ENCODE measurements at regions of chr10 and their contacts with region 1.

Region 1: GRCh38 chr10:95656291-95657164 is at the start of gene ALDH18A1:
- DNase-seq: peak; percentile 96
- ATAC-seq: peak; percentile 95
- H3K4me3 ChIP-seq: peak within 1 kb of the TSS; percentile 0 to 74 (median 64)
- H3K4me3 Mint-ChIP-seq: peak within 1 kb of the TSS; percentile 98
- H3K27ac ChIP-seq: peak within 1 kb of the TSS in 1 of 2 donors; percentile 27
- H3K27ac Mint-ChIP-seq: peak within 1 kb of the TSS; percentile 93
- H3K4me1 ChIP-seq: peaks cover 7 to 13% of the 10 kb centered on the region in 2 donors
- H3K4me1 Mint-ChIP-seq: peaks cover 30% of the 10 kb centered on the region
- H3K27me3 ChIP-seq: no peaks in the 10 kb centered on the region
- H3K27me3 Mint-ChIP-seq: no peaks in the 10 kb centered on the region
- CTCF ChIP-seq: no peak
- total RNA-seq, gene ALDH18A1: 27.6 and 30.7 TPM in 2 replicates

Region 2: DNA sequence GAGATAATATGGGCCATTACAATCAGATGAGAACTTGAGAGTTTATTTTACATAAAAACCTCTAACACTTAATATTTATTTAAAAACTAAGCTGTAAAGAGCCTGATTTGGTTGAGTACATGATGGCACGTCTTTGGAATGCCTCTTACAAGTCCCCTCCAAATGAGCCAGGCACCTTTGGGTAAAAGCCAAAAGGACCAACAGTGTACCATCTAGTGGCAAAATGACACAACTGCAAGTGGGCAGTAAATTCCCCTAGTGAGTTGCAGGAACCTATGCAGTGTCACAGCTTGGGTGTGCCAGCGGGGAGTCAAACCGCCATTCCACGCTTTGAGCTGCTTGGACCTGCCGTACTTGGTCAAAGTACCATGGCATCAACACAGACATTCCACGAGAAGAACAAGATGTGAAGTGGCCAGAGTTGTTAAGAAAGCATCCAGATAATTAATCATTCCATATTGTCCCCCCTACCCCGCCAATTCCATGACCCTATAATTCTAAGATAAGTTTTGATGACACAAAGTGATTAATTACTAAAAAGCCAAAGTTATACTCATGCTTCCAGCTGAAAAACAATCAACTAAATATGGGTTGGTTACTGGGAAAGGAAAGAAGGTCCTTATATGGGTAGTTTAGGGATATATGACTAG is 210.6 kb before region 1 on chr10:
- CTCF ChIA-PET with region 1: no interaction called
- POLR2A ChIA-PET with region 1: no interaction called
- intact Hi-C with region 1: no loop called
- DNase-seq: peak; percentile 62
- ATAC-seq: peak; percentile 62
- H3K4me3 ChIP-seq: no peak overlapping the region
- H3K4me3 Mint-ChIP-seq: no peak overlapping the region
- H3K27ac ChIP-seq: no peak overlapping the region
- H3K27ac Mint-ChIP-seq: no peak overlapping the region
- H3K4me1 ChIP-seq: no peaks in the 10 kb centered on the region
- H3K4me1 Mint-ChIP-seq: no peaks in the 10 kb centered on the region
- H3K27me3 ChIP-seq: peaks cover 0 to 10% (median 1%) of the 10 kb centered on the region in 4 experiments
- H3K27me3 Mint-ChIP-seq: peaks cover 21% of the 10 kb centered on the region
- CTCF ChIP-seq: peak; percentile 86

Region 3: GRCh38 chr10:95561182-95562075 is 95.1 kb before region 1 on chr10 and contains the start of gene SORBS1:
- CTCF ChIA-PET with region 1: no interaction called
- POLR2A ChIA-PET with region 1: no interaction called
- intact Hi-C with region 1: loop called (anchors 1 kb)
- DNase-seq: peak; percentile 90
- ATAC-seq: peak; percentile 98
- H3K4me3 ChIP-seq: peak within 1 kb of the TSS; percentile 72 to 92 (median 86)
- H3K4me3 Mint-ChIP-seq: peak within 1 kb of the TSS; percentile 100
- H3K27ac ChIP-seq: peak within 1 kb of the TSS in 1 of 2 donors; percentile 44
- H3K27ac Mint-ChIP-seq: peak within 1 kb of the TSS; percentile 81
- H3K4me1 ChIP-seq: peaks cover 8 to 11% of the 10 kb centered on the region in 2 donors
- H3K4me1 Mint-ChIP-seq: peaks cover 16% of the 10 kb centered on the region
- H3K27me3 ChIP-seq: peaks cover 0 to 13% (median 0%) of the 10 kb centered on the region in 4 experiments
- H3K27me3 Mint-ChIP-seq: peaks cover 25% of the 10 kb centered on the region
- CTCF ChIP-seq: no peak
- total RNA-seq, gene SORBS1: 0.44 and 1.5 TPM in 2 replicates

Measured in B cell (primary cell).